Activated CD8-positive, alpha-beta T cell treated with anti-CD3 and anti-CD28 coated beads, Interleukin-2, amount 10 ng/mL, durations not matched to agents 7 days and 5 days (primary cell): ENCODE measurements at regions of chr6 and their contacts with region 1.

Region 1: GRCh38 chr6:4018172-4018905 is 60.6 kb downstream of the FAM217A start:
- DNase-seq: peak; percentile 96
- ATAC-seq: peak; percentile 66
- H3K4me3 Mint-ChIP-seq: peak overlapping the region; percentile 92
- H3K27ac Mint-ChIP-seq: peak overlapping the region; percentile 98
- H3K4me1 Mint-ChIP-seq: peaks cover 58% of the 10 kb centered on the region
- H3K27me3 Mint-ChIP-seq: no peaks in the 10 kb centered on the region

Region 2: GRCh38 chr6:4030669-4031068 is 12.3 kb after region 1 on chr6:
- CTCF ChIA-PET with region 1: interaction called, 15 read pairs
- POLR2A ChIA-PET with region 1: interaction called, 5 read pairs
- DNase-seq: no peak
- ATAC-seq: peak; percentile 61
- H3K4me3 Mint-ChIP-seq: no peak overlapping the region
- H3K27ac Mint-ChIP-seq: peak overlapping the region; percentile 18
- H3K4me1 Mint-ChIP-seq: peaks cover 65% of the 10 kb centered on the region
- H3K27me3 Mint-ChIP-seq: no peaks in the 10 kb centered on the region

Region 3: DNA sequence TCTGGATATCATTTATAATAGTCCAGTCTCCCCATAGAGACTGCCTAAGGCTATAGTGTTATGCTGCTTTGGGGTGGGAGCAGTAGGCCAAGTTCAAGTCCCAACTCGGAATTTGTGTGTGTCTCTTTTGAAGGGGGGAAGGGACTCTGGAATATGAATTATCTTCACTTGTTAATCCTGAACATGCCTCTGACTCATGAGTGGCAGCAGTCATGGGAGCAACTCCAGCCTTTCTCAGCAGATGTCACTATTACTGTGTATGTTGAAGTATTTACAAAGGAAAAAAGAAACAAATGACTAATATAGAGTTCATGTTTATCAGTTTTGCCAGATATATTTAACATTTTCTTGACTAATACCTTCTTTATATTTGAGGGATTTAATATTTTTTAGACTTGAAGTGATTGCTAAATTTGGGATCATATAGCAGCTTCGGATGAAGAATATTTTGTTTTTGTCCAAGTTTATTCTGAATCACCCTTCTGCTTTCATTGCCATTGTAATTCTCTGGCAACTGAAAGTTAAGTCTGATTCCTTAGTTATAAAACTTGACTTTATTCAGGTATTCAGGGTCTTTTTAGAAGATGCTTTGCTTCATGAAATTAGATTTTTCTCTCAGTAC is 37.2 kb after region 1 on chr6:
- CTCF ChIA-PET with region 1: interaction called, 18 read pairs
- POLR2A ChIA-PET with region 1: interaction called, 17 read pairs
- DNase-seq: peak; percentile 30
- ATAC-seq: no peak
- H3K4me3 Mint-ChIP-seq: no peak overlapping the region
- H3K27ac Mint-ChIP-seq: peak overlapping the region; percentile 30
- H3K4me1 Mint-ChIP-seq: peaks cover 35% of the 10 kb centered on the region
- H3K27me3 Mint-ChIP-seq: no peaks in the 10 kb centered on the region

Region 4: DNA sequence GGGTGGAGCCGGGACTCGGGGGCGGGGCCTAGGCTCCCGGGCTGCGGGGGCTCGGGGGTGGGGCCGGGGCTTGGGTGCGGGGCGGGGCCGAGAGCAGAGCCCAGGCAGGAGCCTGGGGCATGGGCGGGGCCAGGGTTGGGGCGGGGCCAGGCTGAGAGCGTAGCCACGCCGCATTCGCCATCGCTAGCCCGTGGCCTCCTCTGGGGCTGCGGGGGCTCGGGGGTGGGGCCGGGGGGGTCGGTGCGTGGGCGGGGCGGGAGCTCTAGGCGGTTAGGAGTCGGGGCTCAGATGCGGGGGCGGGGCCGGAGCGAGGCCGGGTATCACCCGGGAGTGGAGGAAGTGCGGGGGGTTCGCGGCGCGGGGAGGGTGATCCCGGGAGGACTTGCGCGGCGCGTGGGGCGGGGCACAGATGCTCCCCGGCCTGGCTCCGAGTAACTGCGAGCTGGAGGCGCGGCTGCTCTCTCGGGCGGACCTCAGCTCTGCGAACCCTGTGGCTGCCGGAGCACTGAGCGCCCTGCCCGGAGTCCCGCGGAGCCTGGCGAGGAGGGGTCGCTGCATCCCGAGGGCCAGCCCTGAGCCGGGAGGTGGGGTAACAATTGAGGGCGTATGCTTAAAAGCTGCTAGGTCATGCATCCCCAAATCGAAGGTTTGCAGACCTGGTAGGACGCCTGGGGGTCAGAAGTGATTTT is 117.5 kb after region 1 on chr6:
- CTCF ChIA-PET with region 1: interaction called, 9 read pairs
- POLR2A ChIA-PET with region 1: interaction called, 30 read pairs
- DNase-seq: peak; percentile 96
- ATAC-seq: peak; percentile 90
- H3K4me3 Mint-ChIP-seq: peak overlapping the region; percentile 83
- H3K27ac Mint-ChIP-seq: peak overlapping the region; percentile 80
- H3K4me1 Mint-ChIP-seq: peaks cover 28% of the 10 kb centered on the region
- H3K27me3 Mint-ChIP-seq: peaks cover 1% of the 10 kb centered on the region